Naive thymus-derived CD4-positive, alpha-beta T cell (primary cell): ENCODE measurements at regions of chr6 and their contacts with region 1.

Region 1: GRCh38 chr6:34223956-34224940 is 12.4 kb upstream of the HMGA1 start:
- DNase-seq: peak; percentile 85 to 97 (median 91)
- ATAC-seq: peak; percentile 99
- H3K4me3 ChIP-seq: peak overlapping the region; percentile 78
- H3K4me3 Mint-ChIP-seq: peak overlapping the region; percentile 42 to 85 (median 76)
- H3K27ac ChIP-seq: peak overlapping the region; percentile 93
- H3K27ac Mint-ChIP-seq: peak overlapping the region; percentile 82 to 95 (median 88)
- H3K4me1 ChIP-seq: peaks cover 4 to 14% of the 10 kb centered on the region in 2 donors
- H3K4me1 Mint-ChIP-seq: peaks cover 5 to 40% (median 10%) of the 10 kb centered on the region in 7 donors
- H3K27me3 ChIP-seq: no peaks in the 10 kb centered on the region
- H3K27me3 Mint-ChIP-seq: no peaks in the 10 kb centered on the region

Region 2: GRCh38 chr6:34182751-34183531 is 41.3 kb before region 1 on chr6:
- CTCF ChIA-PET with region 1: no interaction called
- POLR2A ChIA-PET with region 1: interaction called, 3 read pairs
- intact Hi-C with region 1: loop called in 1 of 2 experiments (anchors 1 kb)
- DNase-seq: peak in 8 of 9 donors; percentile 52 to 81 (median 72)
- ATAC-seq: peak; percentile 95
- H3K4me3 ChIP-seq: peak overlapping the region; percentile 47
- H3K4me3 Mint-ChIP-seq: peak overlapping the region; percentile 43 to 80 (median 67)
- H3K27ac ChIP-seq: peak overlapping the region; percentile 45
- H3K27ac Mint-ChIP-seq: peak overlapping the region; percentile 55 to 90 (median 85)
- H3K4me1 ChIP-seq: peaks cover 23 to 28% of the 10 kb centered on the region in 2 donors
- H3K4me1 Mint-ChIP-seq: peaks cover 17 to 47% (median 34%) of the 10 kb centered on the region in 7 donors
- H3K27me3 ChIP-seq: no peaks in the 10 kb centered on the region
- H3K27me3 Mint-ChIP-seq: peaks cover 0 to 3% (median 0%) of the 10 kb centered on the region in 5 donors